ENCODE measurements at regions of chr13 and their contacts with region 1.

Region 1: GRCh38 chr13:98853771-98854221 is 101.3 kb upstream of the SLC15A1 start:
- DNase-seq: peak; percentile 88
- ATAC-seq: peak; percentile 99
- H3K4me3 Mint-ChIP-seq: no peak overlapping the region
- H3K27ac Mint-ChIP-seq: peak overlapping the region; percentile 41
- H3K4me1 Mint-ChIP-seq: peaks cover 14% of the 10 kb centered on the region
- H3K27me3 Mint-ChIP-seq: no peaks in the 10 kb centered on the region

Region 2: GRCh38 chr13:97141564-97142005 is 1712.2 kb before region 1 on chr13:
- CTCF ChIA-PET with region 1: no interaction called
- POLR2A ChIA-PET with region 1: no interaction called
- intact Hi-C with region 1: loop called in 1 of 2 experiments (anchors 5 kb)
- DNase-seq: peak; percentile 55
- ATAC-seq: peak; percentile 99
- H3K4me3 Mint-ChIP-seq: no peak overlapping the region
- H3K27ac Mint-ChIP-seq: no peak overlapping the region
- H3K4me1 Mint-ChIP-seq: peaks cover 16% of the 10 kb centered on the region
- H3K27me3 Mint-ChIP-seq: peaks cover 26% of the 10 kb centered on the region

Region 3: GRCh38 chr13:98813993-98814392 is 39.8 kb before region 1 on chr13:
- CTCF ChIA-PET with region 1: no interaction called
- POLR2A ChIA-PET with region 1: no interaction called
- intact Hi-C with region 1: no loop called
- DNase-seq: no peak
- ATAC-seq: peak; percentile 49
- H3K4me3 Mint-ChIP-seq: no peak overlapping the region
- H3K27ac Mint-ChIP-seq: no peak overlapping the region
- H3K4me1 Mint-ChIP-seq: no peaks in the 10 kb centered on the region
- H3K27me3 Mint-ChIP-seq: no peaks in the 10 kb centered on the region

Region 4: DNA sequence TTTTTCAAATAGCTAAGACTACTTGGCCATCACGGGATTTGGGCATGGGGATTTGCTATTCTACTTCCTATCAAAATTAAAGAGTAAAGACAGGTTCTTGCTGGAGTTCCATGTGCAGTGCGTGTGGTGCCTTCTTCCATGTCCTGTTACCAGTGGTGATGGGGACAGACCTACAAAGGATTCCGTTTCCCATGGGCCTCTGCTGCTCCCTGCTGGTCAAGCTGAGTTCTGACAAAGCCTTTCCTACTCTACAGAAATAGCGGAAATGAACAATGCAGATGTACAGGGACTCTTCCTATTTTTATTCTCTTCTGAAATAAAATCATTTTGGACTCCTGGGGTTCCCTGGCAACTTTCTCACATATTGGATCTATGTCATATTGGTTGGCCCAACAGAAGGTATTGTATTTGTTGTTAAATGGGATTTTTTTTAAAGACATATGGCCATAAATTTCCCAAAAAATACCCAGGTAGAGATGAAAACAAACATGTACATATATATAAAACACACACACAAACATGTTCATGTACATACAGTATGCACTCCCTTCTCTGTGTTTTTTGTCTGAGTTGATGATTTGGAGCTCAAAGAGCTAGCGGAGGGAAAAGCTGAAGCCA is 10.8 kb before region 1 on chr13:
- CTCF ChIA-PET with region 1: interaction called, 13 read pairs
- POLR2A ChIA-PET with region 1: no interaction called
- intact Hi-C with region 1: no loop called
- DNase-seq: peak; percentile 86
- ATAC-seq: peak; percentile 88
- H3K4me3 Mint-ChIP-seq: no peak overlapping the region
- H3K27ac Mint-ChIP-seq: no peak overlapping the region
- H3K4me1 Mint-ChIP-seq: no peaks in the 10 kb centered on the region
- H3K27me3 Mint-ChIP-seq: no peaks in the 10 kb centered on the region

Region 5: DNA sequence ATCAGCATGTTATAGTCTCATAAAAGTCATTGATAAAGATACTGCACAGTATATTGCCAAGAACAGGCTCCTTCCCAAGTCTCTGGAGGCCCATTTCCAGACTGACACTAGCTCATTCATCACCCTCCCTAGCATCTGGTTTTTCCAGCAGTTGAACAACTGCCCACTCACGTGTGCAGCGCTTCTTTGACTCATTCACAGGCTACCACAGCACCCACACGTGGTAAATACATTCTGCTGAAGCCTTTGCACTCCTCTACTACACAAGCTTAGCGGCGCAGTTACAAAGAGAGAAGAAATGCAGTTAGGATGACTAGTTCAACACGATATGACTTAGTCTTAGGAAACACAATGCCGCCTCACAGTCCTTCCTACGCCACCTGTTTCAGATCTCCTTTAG is 36.4 kb after region 1 on chr13:
- CTCF ChIA-PET with region 1: no interaction called
- POLR2A ChIA-PET with region 1: no interaction called
- intact Hi-C with region 1: loop called in 1 of 2 experiments (anchors 1 kb)
- DNase-seq: peak; percentile 77
- ATAC-seq: peak; percentile 97
- H3K4me3 Mint-ChIP-seq: no peak overlapping the region
- H3K27ac Mint-ChIP-seq: peak overlapping the region; percentile 7
- H3K4me1 Mint-ChIP-seq: peaks cover 17% of the 10 kb centered on the region
- H3K27me3 Mint-ChIP-seq: no peaks in the 10 kb centered on the region